Activated naive CD4-positive, alpha-beta T cell treated with anti-CD3 and anti-CD28 coated beads for 36 hours (primary cell): ENCODE measurements at regions of chr22 and their contacts with region 1.

Region 1: GRCh38 chr22:42090596-42091454 is at the start of gene NDUFA6:
- DNase-seq: peak; percentile 99
- H3K4me3 Mint-ChIP-seq: peak within 1 kb of the TSS; percentile 98
- H3K27ac Mint-ChIP-seq: peak within 1 kb of the TSS; percentile 99
- H3K4me1 Mint-ChIP-seq: peaks cover 31% of the 10 kb centered on the region
- H3K27me3 Mint-ChIP-seq: no peaks in the 10 kb centered on the region
- total RNA-seq, gene NDUFA6: 122 to 126 TPM

Region 2: DNA sequence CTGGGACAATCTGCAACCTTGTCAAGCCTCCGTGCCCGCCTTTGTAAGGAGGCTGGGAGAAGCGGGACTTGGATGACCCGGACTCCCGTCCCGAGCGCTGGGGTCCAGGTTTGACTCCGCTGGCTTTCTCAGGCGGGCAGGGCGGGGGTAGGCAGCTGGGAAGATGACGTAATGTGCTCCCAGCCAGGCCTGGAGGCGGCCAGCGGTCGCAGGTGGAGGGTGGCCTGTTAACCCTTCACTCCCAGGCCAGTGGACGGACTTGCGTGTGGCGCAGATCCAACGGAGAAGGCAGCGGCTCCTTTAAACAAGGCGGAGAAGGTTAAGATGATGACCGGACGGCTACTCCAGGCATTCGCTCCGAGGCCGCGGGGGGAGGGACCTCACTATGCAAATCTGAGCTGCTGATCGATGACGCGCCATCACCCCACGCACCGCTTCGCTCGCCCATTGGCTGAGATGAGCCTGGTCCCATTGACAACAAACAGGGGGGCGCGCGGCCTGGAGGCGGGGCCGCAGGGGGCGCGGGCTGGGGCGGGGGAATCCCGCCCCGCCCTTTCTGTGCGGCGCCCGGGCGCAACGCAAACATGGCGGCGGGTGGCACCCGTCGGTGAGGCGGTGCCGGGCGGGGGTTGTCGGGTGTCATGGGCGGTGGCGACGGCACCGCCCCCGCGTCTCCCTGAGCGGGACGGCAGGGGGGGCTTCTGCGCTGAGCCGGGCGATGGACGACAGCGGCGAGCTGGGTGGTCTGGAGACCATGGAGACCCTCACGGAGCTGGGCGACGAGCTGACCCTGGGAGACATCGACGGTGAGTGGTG is 258.1 kb before region 1 on chr22 and contains the start of gene SREBF2:
- CTCF ChIA-PET with region 1: no interaction called
- intact Hi-C with region 1: loop called (anchors 2 kb)
- DNase-seq: peak; percentile 100
- H3K4me3 Mint-ChIP-seq: peak within 1 kb of the TSS; percentile 98
- H3K27ac Mint-ChIP-seq: peak within 1 kb of the TSS; percentile 100
- H3K4me1 Mint-ChIP-seq: peaks cover 42% of the 10 kb centered on the region
- H3K27me3 Mint-ChIP-seq: no peaks in the 10 kb centered on the region
- total RNA-seq, gene SREBF2: 143 to 147 TPM

Region 3: GRCh38 chr22:41976401-41976901 is 114.4 kb before region 1 on chr22:
- CTCF ChIA-PET with region 1: no interaction called
- intact Hi-C with region 1: no loop called
- DNase-seq: peak; percentile 56
- H3K4me3 Mint-ChIP-seq: peak overlapping the region; percentile 68
- H3K27ac Mint-ChIP-seq: no peak overlapping the region
- H3K4me1 Mint-ChIP-seq: peaks cover 12% of the 10 kb centered on the region
- H3K27me3 Mint-ChIP-seq: peaks cover 48% of the 10 kb centered on the region

Region 4: DNA sequence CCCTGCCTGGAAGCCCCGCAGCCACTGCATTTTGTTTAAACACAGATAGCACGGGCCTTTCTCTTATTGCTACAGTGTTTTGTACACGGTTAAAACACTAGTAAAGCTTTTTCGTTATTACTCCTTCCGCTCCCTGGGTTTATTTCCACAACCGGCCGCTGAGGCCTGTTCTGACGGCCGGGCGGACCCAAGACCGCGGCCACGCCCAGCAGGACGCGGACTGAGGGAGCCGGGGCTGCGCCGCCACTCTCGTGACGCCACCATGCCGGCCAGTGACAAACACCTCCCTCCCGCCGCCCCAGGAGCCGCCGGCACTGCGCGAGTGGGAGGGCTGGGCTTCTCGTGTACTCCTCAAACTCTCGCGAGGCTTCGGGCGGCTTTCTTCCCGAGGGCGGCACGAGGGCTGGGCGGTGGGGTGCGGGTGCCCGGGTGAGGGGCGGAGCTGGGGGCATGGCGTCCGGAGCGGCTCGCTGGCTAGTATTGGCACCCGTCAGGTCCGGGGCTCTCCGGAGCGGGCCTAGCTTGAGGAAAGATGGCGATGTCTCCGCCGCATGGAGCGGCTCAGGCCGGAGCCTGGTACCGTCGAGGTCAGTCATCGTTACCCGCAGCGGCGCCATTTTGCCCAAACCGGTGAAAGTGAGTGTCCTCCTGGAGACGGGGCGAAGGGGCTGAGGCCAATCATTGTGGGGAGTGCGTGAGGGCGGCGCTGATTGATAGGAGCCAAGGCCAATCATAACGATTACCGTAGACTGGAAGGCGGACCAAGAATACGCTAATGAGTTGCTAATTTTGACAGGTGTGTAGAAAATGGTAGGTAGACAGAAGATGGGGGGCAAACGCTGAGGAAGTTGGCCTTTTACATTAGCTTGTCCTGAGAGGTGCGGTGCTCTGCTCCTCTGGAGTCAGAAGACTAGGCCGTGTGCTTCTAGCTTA is 11.2 kb before region 1 on chr22 and contains the start of gene SMDT1:
- CTCF ChIA-PET with region 1: interaction called, 8 read pairs
- intact Hi-C with region 1: loop called (anchors 1 kb)
- DNase-seq: peak; percentile 98
- H3K4me3 Mint-ChIP-seq: peak within 1 kb of the TSS; percentile 95
- H3K27ac Mint-ChIP-seq: peak within 1 kb of the TSS; percentile 96
- H3K4me1 Mint-ChIP-seq: peaks cover 34% of the 10 kb centered on the region
- H3K27me3 Mint-ChIP-seq: no peaks in the 10 kb centered on the region
- total RNA-seq, gene SMDT1: 50.2 to 56.2 TPM

Region 5: DNA sequence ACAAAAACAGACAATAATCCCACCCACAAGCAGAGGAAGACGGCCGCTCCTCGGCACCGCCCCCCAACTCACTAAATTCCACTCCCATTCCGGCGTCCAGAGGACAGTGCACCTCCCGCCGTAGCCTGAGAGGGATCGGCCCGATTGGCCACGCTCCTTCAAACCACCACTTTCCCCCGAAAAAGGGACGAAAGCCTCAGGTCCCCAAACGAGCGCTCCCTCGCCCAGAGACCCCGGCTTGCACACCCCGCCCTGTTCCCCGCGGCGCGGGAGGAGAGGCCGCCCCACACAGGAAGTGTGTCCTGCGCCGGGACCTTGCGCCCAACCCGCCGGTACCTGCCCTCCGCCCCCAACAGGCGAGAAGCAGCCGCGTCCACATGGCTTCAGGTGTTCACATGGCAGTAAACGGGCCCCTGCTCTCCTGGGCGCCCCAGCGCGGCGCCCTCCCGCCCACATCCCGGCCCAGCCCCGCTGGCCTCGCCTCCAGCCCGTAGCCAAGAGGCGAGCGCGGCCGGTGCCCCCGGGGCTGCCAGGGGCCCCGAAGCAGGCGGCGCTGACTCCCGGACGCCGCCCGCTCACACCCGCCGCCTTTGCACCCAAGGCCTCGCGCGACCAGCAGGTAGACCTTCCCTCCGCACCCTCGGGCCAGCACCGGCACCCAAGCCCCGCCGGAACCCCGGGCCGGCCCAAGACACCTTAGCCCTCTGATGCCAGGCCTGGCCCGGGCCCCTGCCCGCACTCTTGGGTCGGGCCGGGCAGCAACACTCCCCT is 178.8 kb after region 1 on chr22:
- CTCF ChIA-PET with region 1: no interaction called
- intact Hi-C with region 1: loop called (anchors 2 kb)
- DNase-seq: peak; percentile 80
- H3K4me3 Mint-ChIP-seq: peak overlapping the region; percentile 92
- H3K27ac Mint-ChIP-seq: peak overlapping the region; percentile 72
- H3K4me1 Mint-ChIP-seq: peaks cover 45% of the 10 kb centered on the region
- H3K27me3 Mint-ChIP-seq: no peaks in the 10 kb centered on the region

Region 6: GRCh38 chr22:42444077-42444904 is 353.5 kb after region 1 on chr22:
- CTCF ChIA-PET with region 1: interaction called, 32 read pairs
- intact Hi-C with region 1: loop called (anchors 2 kb)
- DNase-seq: peak; percentile 92
- H3K4me3 Mint-ChIP-seq: peak overlapping the region; percentile 71
- H3K27ac Mint-ChIP-seq: peak overlapping the region; percentile 87
- H3K4me1 Mint-ChIP-seq: peaks cover 32% of the 10 kb centered on the region
- H3K27me3 Mint-ChIP-seq: no peaks in the 10 kb centered on the region